CD8-positive, alpha-beta memory T cell (primary cell): ENCODE measurements at regions of chr1 and their contacts with region 1.

Region 1: DNA sequence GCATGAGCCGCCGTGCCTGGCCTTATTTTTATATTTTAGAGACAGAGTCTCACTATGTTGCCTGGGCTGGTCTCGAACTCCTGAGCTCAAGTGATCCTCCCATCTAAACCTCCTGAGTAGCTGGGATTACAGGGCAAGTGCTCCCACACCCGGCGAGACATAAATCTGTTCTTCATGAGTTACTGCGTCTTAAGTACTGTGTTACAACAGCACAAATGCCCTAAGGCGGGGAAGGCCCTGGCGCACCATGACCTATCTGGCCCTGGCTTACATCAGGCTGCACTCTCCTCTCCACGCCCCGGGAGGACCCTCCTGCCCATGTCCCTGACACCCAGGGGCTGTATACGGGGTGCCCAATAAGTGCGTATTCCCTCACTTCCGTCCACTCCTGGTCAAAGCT is 4.2 kb downstream of the GPR153 start:
- DNase-seq: no peak
- H3K4me3 ChIP-seq: no peak overlapping the region
- H3K4me3 Mint-ChIP-seq: no peak overlapping the region
- H3K27ac ChIP-seq: no peak overlapping the region
- H3K27ac Mint-ChIP-seq: no peak overlapping the region
- H3K4me1 ChIP-seq: peaks cover 4% of the 10 kb centered on the region
- H3K4me1 Mint-ChIP-seq: peaks cover 0 to 2% (median 0%) of the 10 kb centered on the region in 3 donors
- H3K27me3 ChIP-seq: peaks cover 6% of the 10 kb centered on the region
- H3K27me3 Mint-ChIP-seq: peaks cover 10 to 19% of the 10 kb centered on the region in 2 donors

Region 2: GRCh38 chr1:6188466-6188865 is 68.2 kb before region 1 on chr1:
- CTCF ChIA-PET with region 1: no interaction called
- POLR2A ChIA-PET with region 1: no interaction called
- DNase-seq: no peak
- H3K4me3 ChIP-seq: no peak overlapping the region
- H3K4me3 Mint-ChIP-seq: no peak overlapping the region
- H3K27ac ChIP-seq: no peak overlapping the region
- H3K27ac Mint-ChIP-seq: peak overlapping the region in 1 of 8 donors; percentile 91
- H3K4me1 ChIP-seq: no peaks in the 10 kb centered on the region
- H3K4me1 Mint-ChIP-seq: peaks cover 27 to 42% (median 40%) of the 10 kb centered on the region in 3 donors
- H3K27me3 ChIP-seq: no peaks in the 10 kb centered on the region
- H3K27me3 Mint-ChIP-seq: no peaks in the 10 kb centered on the region

Region 3: GRCh38 chr1:6208723-6209660 is 47.7 kb before region 1 on chr1:
- CTCF ChIA-PET with region 1: no interaction called
- POLR2A ChIA-PET with region 1: interaction called, 11 read pairs
- DNase-seq: no peak
- H3K4me3 ChIP-seq: no peak overlapping the region
- H3K4me3 Mint-ChIP-seq: peak overlapping the region; percentile 20 to 59 (median 44)
- H3K27ac ChIP-seq: peak overlapping the region; percentile 51
- H3K27ac Mint-ChIP-seq: peak overlapping the region in 1 of 8 donors; percentile 68
- H3K4me1 ChIP-seq: peaks cover 12% of the 10 kb centered on the region
- H3K4me1 Mint-ChIP-seq: peaks cover 0 to 17% (median 4%) of the 10 kb centered on the region in 3 donors
- H3K27me3 ChIP-seq: peaks cover 12% of the 10 kb centered on the region
- H3K27me3 Mint-ChIP-seq: peaks cover 4 to 12% of the 10 kb centered on the region in 2 donors

Region 4: DNA sequence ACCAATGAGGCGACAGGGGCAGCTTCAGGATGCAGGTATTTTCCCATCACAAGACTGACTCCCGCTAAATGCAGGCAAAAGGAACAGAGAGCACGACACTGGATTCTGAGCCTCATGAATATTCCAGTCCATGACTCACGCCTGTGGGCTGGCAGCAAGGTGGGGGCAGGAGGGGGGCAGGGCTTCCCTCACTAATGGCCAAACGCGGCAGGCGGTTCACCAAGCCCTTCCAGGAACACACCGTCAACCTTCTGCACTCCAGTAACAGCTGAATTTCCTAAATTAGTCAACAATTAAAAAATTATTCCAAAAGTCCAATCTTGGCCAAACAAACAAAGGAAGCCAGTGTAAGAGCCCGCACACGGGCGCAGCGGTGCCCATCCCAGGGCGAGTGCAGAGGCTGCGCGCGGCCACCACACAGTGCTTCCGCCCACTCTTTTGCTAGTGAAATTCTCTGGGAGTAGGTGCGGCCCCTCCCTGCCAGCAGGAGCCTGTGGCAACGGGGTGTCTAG is 16.8 kb after region 1 on chr1:
- CTCF ChIA-PET with region 1: no interaction called
- POLR2A ChIA-PET with region 1: no interaction called
- DNase-seq: no peak
- H3K4me3 ChIP-seq: no peak overlapping the region
- H3K4me3 Mint-ChIP-seq: no peak overlapping the region
- H3K27ac ChIP-seq: no peak overlapping the region
- H3K27ac Mint-ChIP-seq: no peak overlapping the region
- H3K4me1 ChIP-seq: no peaks in the 10 kb centered on the region
- H3K4me1 Mint-ChIP-seq: no peaks in the 10 kb centered on the region
- H3K27me3 ChIP-seq: no peaks in the 10 kb centered on the region
- H3K27me3 Mint-ChIP-seq: no peaks in the 10 kb centered on the region

Region 5: DNA sequence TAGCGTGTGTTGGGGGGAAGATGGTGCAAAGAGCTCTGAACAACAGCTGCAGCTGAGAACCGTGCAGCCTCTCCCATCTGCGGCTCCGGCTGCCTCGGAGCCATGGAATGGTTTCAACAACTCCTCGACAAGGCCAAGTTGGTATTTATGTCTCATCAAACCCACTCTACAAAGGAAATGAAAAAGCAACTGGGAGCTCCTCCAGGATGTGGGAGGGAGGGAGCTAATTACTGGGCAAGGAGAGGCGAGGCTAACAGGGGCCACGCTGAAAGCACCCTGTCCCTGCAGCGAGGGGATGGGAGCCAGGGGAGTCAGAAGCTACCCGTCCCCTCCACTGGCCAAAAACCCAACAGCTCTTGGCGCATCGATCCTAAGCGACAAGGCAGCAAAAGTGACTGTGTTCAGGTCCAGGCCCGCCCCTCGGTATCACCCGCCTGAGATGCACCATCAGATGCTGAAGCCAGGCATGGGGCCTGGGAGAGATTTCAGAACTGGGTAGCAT is 73.8 kb after region 1 on chr1:
- CTCF ChIA-PET with region 1: no interaction called
- POLR2A ChIA-PET with region 1: no interaction called
- DNase-seq: no peak
- H3K4me3 ChIP-seq: no peak overlapping the region
- H3K4me3 Mint-ChIP-seq: no peak overlapping the region
- H3K27ac ChIP-seq: no peak overlapping the region
- H3K27ac Mint-ChIP-seq: peak overlapping the region in 1 of 8 donors; percentile 6
- H3K4me1 ChIP-seq: no peaks in the 10 kb centered on the region
- H3K4me1 Mint-ChIP-seq: no peaks in the 10 kb centered on the region
- H3K27me3 ChIP-seq: no peaks in the 10 kb centered on the region
- H3K27me3 Mint-ChIP-seq: peaks cover 0 to 1% of the 10 kb centered on the region in 2 donors